ENCODE measurements at regions of chr1 and their contacts with region 1.

Region 1: GRCh38 chr1:23484253-23485001 is 448 bp upstream of the ASAP3 start:
- DNase-seq: peak; percentile 84 to 96 (median 91)
- ATAC-seq: peak; percentile 91
- H3K4me3 ChIP-seq: peak overlapping the region; percentile 45 to 57
- H3K4me3 Mint-ChIP-seq: peak overlapping the region; percentile 87
- H3K27ac ChIP-seq: no peak overlapping the region
- H3K27ac Mint-ChIP-seq: peak overlapping the region; percentile 57
- H3K4me1 ChIP-seq: peaks cover 12% of the 10 kb centered on the region
- H3K4me1 Mint-ChIP-seq: peaks cover 17% of the 10 kb centered on the region
- H3K27me3 ChIP-seq: peaks cover 0 to 11% of the 10 kb centered on the region in 2 experiments
- H3K27me3 Mint-ChIP-seq: peaks cover 9% of the 10 kb centered on the region
- CTCF ChIP-seq: no peak

Region 2: GRCh38 chr1:22001409-22001808 is 1483.0 kb before region 1 on chr1 and contains the start of gene CELA3A:
- CTCF ChIA-PET with region 1: no interaction called
- POLR2A ChIA-PET with region 1: no interaction called
- intact Hi-C with region 1: no loop called
- DNase-seq: no peak
- ATAC-seq: no peak
- H3K4me3 ChIP-seq: no peak within 1 kb of the TSS
- H3K4me3 Mint-ChIP-seq: no peak within 1 kb of the TSS
- H3K27ac ChIP-seq: no peak within 1 kb of the TSS
- H3K27ac Mint-ChIP-seq: no peak within 1 kb of the TSS
- H3K4me1 ChIP-seq: no peaks in the 10 kb centered on the region
- H3K4me1 Mint-ChIP-seq: no peaks in the 10 kb centered on the region
- H3K27me3 ChIP-seq: no peaks in the 10 kb centered on the region
- H3K27me3 Mint-ChIP-seq: no peaks in the 10 kb centered on the region
- CTCF ChIP-seq: no peak
- total RNA-seq, gene CELA3A: not detected

Region 3: GRCh38 chr1:23019094-23019862 is 465.1 kb before region 1 on chr1 and contains the start of gene KDM1A:
- CTCF ChIA-PET with region 1: no interaction called
- POLR2A ChIA-PET with region 1: no interaction called
- intact Hi-C with region 1: loop called in 1 of 2 experiments (anchors 2 kb)
- DNase-seq: peak; percentile 89 to 98 (median 95)
- ATAC-seq: peak; percentile 98
- H3K4me3 ChIP-seq: peak within 1 kb of the TSS; percentile 57 to 90
- H3K4me3 Mint-ChIP-seq: peak within 1 kb of the TSS; percentile 99
- H3K27ac ChIP-seq: peak within 1 kb of the TSS; percentile 41 to 69
- H3K27ac Mint-ChIP-seq: peak within 1 kb of the TSS; percentile 93
- H3K4me1 ChIP-seq: peaks cover 14% of the 10 kb centered on the region
- H3K4me1 Mint-ChIP-seq: peaks cover 46% of the 10 kb centered on the region
- H3K27me3 ChIP-seq: no peaks in the 10 kb centered on the region
- H3K27me3 Mint-ChIP-seq: no peaks in the 10 kb centered on the region
- CTCF ChIP-seq: no peak
- total RNA-seq, gene KDM1A: 42.2 to 46.2 TPM

Region 4: DNA sequence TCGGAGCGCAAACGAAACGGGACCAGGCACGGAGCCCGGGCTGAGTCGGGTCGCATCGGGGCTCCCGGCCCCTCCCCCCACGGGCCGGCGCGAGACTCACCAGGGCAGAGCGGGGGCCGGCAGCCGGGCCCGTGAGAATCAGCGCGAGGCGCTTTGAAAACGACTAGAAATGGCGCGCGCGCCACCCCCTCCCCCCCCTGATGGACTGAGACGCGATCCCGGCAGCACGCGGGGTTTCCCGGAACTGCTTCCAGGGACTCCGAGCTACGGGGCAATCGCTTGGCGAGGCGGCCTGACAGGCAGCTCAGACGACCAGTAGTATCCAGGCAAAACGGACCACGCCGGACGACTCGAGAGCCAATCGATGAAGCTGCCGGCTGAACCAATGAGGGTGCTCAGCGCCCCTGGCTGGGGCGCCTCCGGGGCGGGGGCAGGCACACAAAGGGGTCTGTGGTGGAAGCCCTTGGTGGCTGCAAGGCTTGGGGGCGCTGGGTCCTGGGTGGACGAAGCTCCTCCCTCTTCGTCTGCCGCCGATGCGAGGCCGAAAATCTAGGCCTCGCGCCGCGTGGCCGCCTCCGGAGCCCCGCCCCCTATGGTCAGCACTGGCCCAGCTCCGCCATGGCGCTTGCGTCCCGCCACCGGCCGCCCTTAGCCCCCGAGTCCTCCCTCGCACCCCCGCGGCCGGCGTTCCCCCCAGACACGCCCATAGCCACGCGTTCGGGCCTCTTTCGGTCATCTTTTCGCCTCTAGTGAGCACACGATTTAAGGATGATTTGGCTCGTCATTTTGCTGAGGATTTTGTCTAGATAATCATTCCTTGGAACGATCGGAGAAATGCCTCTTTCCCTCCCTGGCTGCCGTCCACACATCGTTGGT is 140.1 kb before region 1 on chr1 and contains the start of gene HNRNPR:
- CTCF ChIA-PET with region 1: no interaction called
- POLR2A ChIA-PET with region 1: interaction called, 4 read pairs
- intact Hi-C with region 1: loop called (anchors 2 kb)
- DNase-seq: peak; percentile 97 to 100 (median 99)
- ATAC-seq: peak; percentile 96
- H3K4me3 ChIP-seq: peak within 1 kb of the TSS; percentile 70 to 93
- H3K4me3 Mint-ChIP-seq: peak within 1 kb of the TSS; percentile 94
- H3K27ac ChIP-seq: peak within 1 kb of the TSS; percentile 66 to 78
- H3K27ac Mint-ChIP-seq: peak within 1 kb of the TSS; percentile 96
- H3K4me1 ChIP-seq: peaks cover 31% of the 10 kb centered on the region
- H3K4me1 Mint-ChIP-seq: peaks cover 42% of the 10 kb centered on the region
- H3K27me3 ChIP-seq: no peaks in the 10 kb centered on the region
- H3K27me3 Mint-ChIP-seq: no peaks in the 10 kb centered on the region
- CTCF ChIP-seq: no peak
- total RNA-seq, gene HNRNPR: 102 to 103 TPM

Region 5: GRCh38 chr1:23422241-23423030 is 62.0 kb before region 1 on chr1:
- CTCF ChIA-PET with region 1: no interaction called
- POLR2A ChIA-PET with region 1: interaction called, 3 read pairs
- intact Hi-C with region 1: loop called in 1 of 2 experiments (anchors 2 kb)
- DNase-seq: peak in 8 of 9 experiments; percentile 37 to 80 (median 55)
- ATAC-seq: peak; percentile 77
- H3K4me3 ChIP-seq: peak overlapping the region in 1 of 2 experiments; percentile 21
- H3K4me3 Mint-ChIP-seq: peak overlapping the region; percentile 89
- H3K27ac ChIP-seq: peak overlapping the region in 1 of 2 experiments; percentile 43
- H3K27ac Mint-ChIP-seq: peak overlapping the region; percentile 76
- H3K4me1 ChIP-seq: peaks cover 32% of the 10 kb centered on the region
- H3K4me1 Mint-ChIP-seq: peaks cover 36% of the 10 kb centered on the region
- H3K27me3 ChIP-seq: no peaks in the 10 kb centered on the region
- H3K27me3 Mint-ChIP-seq: peaks cover 3% of the 10 kb centered on the region
- CTCF ChIP-seq: no peak

Region 6: DNA sequence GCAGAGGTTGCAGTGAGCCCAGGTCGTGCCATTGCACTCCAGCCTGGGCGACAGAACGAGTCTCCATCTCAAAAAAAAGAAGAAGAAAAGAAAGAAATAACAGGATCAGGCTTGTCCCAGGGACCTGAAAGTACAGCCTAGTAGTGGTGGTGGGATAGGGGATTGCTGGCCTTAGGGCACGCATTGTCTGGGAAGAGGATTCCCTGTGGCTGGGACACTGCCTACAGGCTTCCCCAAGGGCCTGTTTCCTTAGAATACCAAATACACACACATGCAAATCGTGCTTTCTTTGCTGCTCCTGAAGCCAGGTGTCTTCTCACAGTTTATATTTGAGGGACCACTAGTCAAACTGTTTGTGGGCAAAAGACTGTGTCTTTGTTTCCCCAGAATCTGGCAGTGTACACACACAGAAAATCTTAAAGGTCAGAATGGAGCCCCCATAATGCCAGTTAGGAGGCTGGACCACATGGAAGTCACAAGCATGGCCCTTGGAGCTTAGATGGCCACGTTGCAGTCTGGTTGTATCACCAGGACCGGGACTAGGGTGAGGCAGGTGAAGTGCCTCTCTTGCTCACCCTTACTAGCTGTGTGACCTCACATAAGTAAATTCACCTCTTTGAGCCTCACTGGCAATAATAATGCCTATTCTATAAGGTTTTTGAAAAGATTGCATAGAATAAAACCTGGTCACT is 12.2 kb after region 1 on chr1:
- CTCF ChIA-PET with region 1: interaction called, 45 read pairs
- POLR2A ChIA-PET with region 1: interaction called, 4 read pairs
- intact Hi-C with region 1: no loop called
- DNase-seq: no peak
- ATAC-seq: peak; percentile 23
- H3K4me3 ChIP-seq: no peak overlapping the region
- H3K4me3 Mint-ChIP-seq: no peak overlapping the region
- H3K27ac ChIP-seq: no peak overlapping the region
- H3K27ac Mint-ChIP-seq: no peak overlapping the region
- H3K4me1 ChIP-seq: no peaks in the 10 kb centered on the region
- H3K4me1 Mint-ChIP-seq: no peaks in the 10 kb centered on the region
- H3K27me3 ChIP-seq: no peaks in the 10 kb centered on the region
- H3K27me3 Mint-ChIP-seq: peaks cover 4% of the 10 kb centered on the region
- CTCF ChIP-seq: no peak

Region 7: GRCh38 chr1:23530747-23531561 is 46.5 kb after region 1 on chr1 and contains the start of gene E2F2:
- CTCF ChIA-PET with region 1: interaction called, 5 read pairs
- POLR2A ChIA-PET with region 1: interaction called, 3 read pairs
- intact Hi-C with region 1: loop called (anchors 1 to 2 kb)
- DNase-seq: peak; percentile 56 to 91 (median 82)
- ATAC-seq: peak; percentile 71
- H3K4me3 ChIP-seq: peak within 1 kb of the TSS; percentile 42 to 52
- H3K4me3 Mint-ChIP-seq: peak within 1 kb of the TSS; percentile 85
- H3K27ac ChIP-seq: peak within 1 kb of the TSS in 1 of 2 experiments; percentile 72
- H3K27ac Mint-ChIP-seq: peak within 1 kb of the TSS; percentile 13
- H3K4me1 ChIP-seq: peaks cover 60% of the 10 kb centered on the region
- H3K4me1 Mint-ChIP-seq: peaks cover 63% of the 10 kb centered on the region
- H3K27me3 ChIP-seq: no peaks in the 10 kb centered on the region
- H3K27me3 Mint-ChIP-seq: no peaks in the 10 kb centered on the region
- CTCF ChIP-seq: no peak
- total RNA-seq, gene E2F2: 0.19 to 0.38 TPM

Region 8: GRCh38 chr1:23691499-23692307 is 207.3 kb after region 1 on chr1 and contains the start of gene RPL11:
- CTCF ChIA-PET with region 1: no interaction called
- POLR2A ChIA-PET with region 1: no interaction called
- intact Hi-C with region 1: loop called in 1 of 2 experiments (anchors 1 kb)
- DNase-seq: peak; percentile 73 to 95 (median 88)
- ATAC-seq: peak; percentile 99
- H3K4me3 ChIP-seq: peak within 1 kb of the TSS; percentile 68 to 84
- H3K4me3 Mint-ChIP-seq: peak within 1 kb of the TSS; percentile 96
- H3K27ac ChIP-seq: peak within 1 kb of the TSS; percentile 74 to 87
- H3K27ac Mint-ChIP-seq: peak within 1 kb of the TSS; percentile 97
- H3K4me1 ChIP-seq: peaks cover 41% of the 10 kb centered on the region
- H3K4me1 Mint-ChIP-seq: peaks cover 46% of the 10 kb centered on the region
- H3K27me3 ChIP-seq: no peaks in the 10 kb centered on the region
- H3K27me3 Mint-ChIP-seq: no peaks in the 10 kb centered on the region
- CTCF ChIP-seq: peak; percentile 77
- total RNA-seq, gene RPL11: 2,153 to 2,178 TPM

Region 9: GRCh38 chr1:24027838-24028468 is 543.5 kb after region 1 on chr1:
- CTCF ChIA-PET with region 1: no interaction called
- POLR2A ChIA-PET with region 1: no interaction called
- intact Hi-C with region 1: no loop called
- DNase-seq: peak in 2 of 9 experiments; percentile 26 to 47
- ATAC-seq: no peak
- H3K4me3 ChIP-seq: no peak overlapping the region
- H3K4me3 Mint-ChIP-seq: no peak overlapping the region
- H3K27ac ChIP-seq: no peak overlapping the region
- H3K27ac Mint-ChIP-seq: no peak overlapping the region
- H3K4me1 ChIP-seq: no peaks in the 10 kb centered on the region
- H3K4me1 Mint-ChIP-seq: peaks cover 2% of the 10 kb centered on the region
- H3K27me3 ChIP-seq: no peaks in the 10 kb centered on the region
- H3K27me3 Mint-ChIP-seq: no peaks in the 10 kb centered on the region
- CTCF ChIP-seq: peak; percentile 27